Activated CD8-positive, alpha-beta T cell treated with anti-CD3 and anti-CD28 coated beads, Interleukin-2, amount 10 ng/mL, durations not matched to agents 7 days and 5 days (primary cell): ENCODE measurements at regions of chr6 and their contacts with region 1.

Region 1: DNA sequence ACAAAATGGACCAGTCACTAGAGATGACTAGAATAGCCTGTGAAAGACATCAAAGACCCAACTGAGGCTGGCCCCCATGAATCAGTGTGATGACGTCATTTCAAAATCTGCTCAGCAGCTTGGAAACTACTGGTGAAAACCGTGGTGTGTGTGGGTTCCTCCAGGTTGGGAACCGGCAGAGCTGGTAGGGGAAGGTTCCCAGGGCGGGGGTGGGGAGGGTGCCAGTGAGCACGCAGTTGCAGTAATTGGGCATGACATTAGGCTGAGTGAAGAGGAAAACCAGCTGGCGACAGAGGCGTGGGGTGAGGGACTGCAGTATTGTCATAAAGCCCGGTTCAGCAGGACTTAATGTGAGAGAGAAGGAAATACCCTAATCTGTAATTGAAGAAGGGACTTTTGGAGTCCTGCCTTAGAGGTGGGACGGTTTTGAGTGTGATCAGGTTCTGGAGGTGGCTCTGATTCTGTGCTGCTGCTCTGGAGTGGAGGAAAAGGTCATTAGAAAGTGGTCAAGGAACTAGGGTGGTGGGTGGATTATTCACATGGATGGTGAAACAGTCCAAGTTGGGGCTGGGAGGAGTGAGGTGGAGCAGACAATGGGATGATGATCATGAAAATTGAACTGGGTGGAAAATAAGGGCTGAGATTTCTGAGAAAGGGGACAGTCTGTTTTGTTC is 52.0 kb upstream of the MTHFD1L start:
- DNase-seq: no peak
- ATAC-seq: no peak
- H3K4me3 Mint-ChIP-seq: no peak overlapping the region
- H3K27ac Mint-ChIP-seq: no peak overlapping the region
- H3K4me1 Mint-ChIP-seq: peaks cover 6% of the 10 kb centered on the region
- H3K27me3 Mint-ChIP-seq: peaks cover 10% of the 10 kb centered on the region

Region 2: GRCh38 chr6:150068720-150069648 is 744.5 kb before region 1 on chr6 and contains the start of gene ULBP3:
- CTCF ChIA-PET with region 1: interaction called, 14 read pairs
- POLR2A ChIA-PET with region 1: no interaction called
- DNase-seq: peak; percentile 81
- ATAC-seq: peak; percentile 92
- H3K4me3 Mint-ChIP-seq: peak within 1 kb of the TSS; percentile 70
- H3K27ac Mint-ChIP-seq: peak within 1 kb of the TSS; percentile 36
- H3K4me1 Mint-ChIP-seq: peaks cover 22% of the 10 kb centered on the region
- H3K27me3 Mint-ChIP-seq: peaks cover 18% of the 10 kb centered on the region
- total RNA-seq, gene ULBP3: 1.8 to 2.9 TPM

Region 3: GRCh38 chr6:150079604-150080003 is 733.9 kb before region 1 on chr6:
- CTCF ChIA-PET with region 1: interaction called, 13 read pairs
- POLR2A ChIA-PET with region 1: no interaction called
- DNase-seq: peak; percentile 63
- ATAC-seq: peak; percentile 64
- H3K4me3 Mint-ChIP-seq: no peak overlapping the region
- H3K27ac Mint-ChIP-seq: peak overlapping the region; percentile 31
- H3K4me1 Mint-ChIP-seq: peaks cover 38% of the 10 kb centered on the region
- H3K27me3 Mint-ChIP-seq: peaks cover 20% of the 10 kb centered on the region

Region 4: DNA sequence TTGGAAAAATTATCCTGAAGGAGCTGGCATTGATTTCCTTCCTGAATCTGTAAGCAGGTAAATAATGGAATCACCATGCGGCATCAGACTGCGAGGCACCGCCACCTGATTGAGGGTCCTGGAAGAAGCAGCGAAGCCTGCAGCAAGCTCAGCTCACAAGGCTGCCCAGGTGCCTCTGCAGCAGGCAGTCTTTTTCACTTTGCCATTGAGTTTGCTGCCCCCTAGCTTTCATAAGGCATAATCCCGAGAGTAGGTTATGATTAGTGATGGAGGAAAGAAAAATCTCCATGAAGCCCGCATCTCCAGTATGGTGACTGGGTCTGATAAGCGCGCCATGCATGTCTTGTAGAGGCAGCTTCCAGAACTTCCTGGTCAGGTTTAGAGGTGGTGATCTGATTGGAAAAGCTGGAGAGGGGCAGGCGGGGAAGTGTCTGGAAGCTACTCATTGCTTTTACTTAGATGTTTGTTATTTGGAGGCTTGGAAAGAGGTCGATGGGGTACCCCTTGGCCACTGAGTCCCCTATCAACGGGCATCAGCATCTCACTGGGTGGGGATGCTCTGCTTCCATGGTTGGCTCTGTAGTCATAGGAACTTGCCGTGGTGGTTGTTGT is 418.0 kb before region 1 on chr6:
- CTCF ChIA-PET with region 1: interaction called, 11 read pairs
- POLR2A ChIA-PET with region 1: no interaction called
- DNase-seq: peak; percentile 52
- ATAC-seq: peak; percentile 70
- H3K4me3 Mint-ChIP-seq: no peak overlapping the region
- H3K27ac Mint-ChIP-seq: no peak overlapping the region
- H3K4me1 Mint-ChIP-seq: no peaks in the 10 kb centered on the region
- H3K27me3 Mint-ChIP-seq: peaks cover 12% of the 10 kb centered on the region

Region 5: DNA sequence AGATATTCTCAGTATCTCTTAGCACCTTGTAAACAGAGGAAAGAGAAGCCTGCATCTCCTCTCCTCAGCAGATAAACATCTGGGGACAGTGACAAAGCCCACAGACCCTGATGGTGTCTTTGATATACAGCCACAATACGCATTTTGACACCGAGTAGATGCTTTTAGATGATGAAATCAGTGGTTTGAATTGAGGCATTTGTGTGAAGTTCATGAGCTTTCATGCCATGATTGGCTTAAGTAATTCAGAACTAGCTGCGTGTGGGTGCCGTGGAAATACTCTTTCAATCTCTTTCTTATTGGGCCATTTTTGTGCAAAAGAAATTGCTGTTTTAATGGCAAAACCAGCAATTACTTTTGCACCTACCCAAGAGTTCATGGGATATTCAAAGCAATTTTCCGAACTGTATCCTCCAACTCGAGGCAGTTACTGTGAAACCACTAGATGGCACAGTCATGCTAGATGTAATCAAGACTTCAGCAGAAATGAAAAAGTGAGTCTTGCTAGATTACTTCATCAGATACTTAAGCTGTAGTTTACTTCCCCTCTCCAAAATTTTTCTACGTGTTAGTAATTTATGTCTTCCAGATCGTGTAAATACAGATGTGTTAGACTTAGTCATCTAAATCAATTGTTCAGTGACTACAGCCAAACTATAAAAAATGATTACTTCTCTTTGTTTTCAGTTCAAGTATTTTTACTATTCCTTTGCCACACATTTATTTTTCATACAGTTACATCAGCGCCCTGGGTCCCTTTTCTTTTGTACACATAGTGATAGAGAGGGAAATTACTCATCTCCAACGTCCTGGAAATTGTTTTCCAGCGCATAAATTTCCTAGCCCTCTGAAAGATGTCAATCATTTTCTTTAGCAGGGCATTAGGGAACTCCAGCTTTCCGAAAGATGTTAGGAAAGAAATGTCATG is 395.3 kb before region 1 on chr6:
- CTCF ChIA-PET with region 1: interaction called, 137 read pairs
- POLR2A ChIA-PET with region 1: interaction called, 3 read pairs
- DNase-seq: peak; percentile 54
- ATAC-seq: peak; percentile 78
- H3K4me3 Mint-ChIP-seq: peak overlapping the region; percentile 57
- H3K27ac Mint-ChIP-seq: peak overlapping the region; percentile 64
- H3K4me1 Mint-ChIP-seq: peaks cover 23% of the 10 kb centered on the region
- H3K27me3 Mint-ChIP-seq: peaks cover 26% of the 10 kb centered on the region

Region 6: GRCh38 chr6:150685860-150686259 is 127.6 kb before region 1 on chr6:
- CTCF ChIA-PET with region 1: interaction called, 11 read pairs
- POLR2A ChIA-PET with region 1: no interaction called
- DNase-seq: peak; percentile 57
- ATAC-seq: peak; percentile 60
- H3K4me3 Mint-ChIP-seq: no peak overlapping the region
- H3K27ac Mint-ChIP-seq: no peak overlapping the region
- H3K4me1 Mint-ChIP-seq: peaks cover 12% of the 10 kb centered on the region
- H3K27me3 Mint-ChIP-seq: no peaks in the 10 kb centered on the region